Caco-2 (cell line): ENCODE measurements at regions of chr1 and their contacts with region 1.

Region 1: DNA sequence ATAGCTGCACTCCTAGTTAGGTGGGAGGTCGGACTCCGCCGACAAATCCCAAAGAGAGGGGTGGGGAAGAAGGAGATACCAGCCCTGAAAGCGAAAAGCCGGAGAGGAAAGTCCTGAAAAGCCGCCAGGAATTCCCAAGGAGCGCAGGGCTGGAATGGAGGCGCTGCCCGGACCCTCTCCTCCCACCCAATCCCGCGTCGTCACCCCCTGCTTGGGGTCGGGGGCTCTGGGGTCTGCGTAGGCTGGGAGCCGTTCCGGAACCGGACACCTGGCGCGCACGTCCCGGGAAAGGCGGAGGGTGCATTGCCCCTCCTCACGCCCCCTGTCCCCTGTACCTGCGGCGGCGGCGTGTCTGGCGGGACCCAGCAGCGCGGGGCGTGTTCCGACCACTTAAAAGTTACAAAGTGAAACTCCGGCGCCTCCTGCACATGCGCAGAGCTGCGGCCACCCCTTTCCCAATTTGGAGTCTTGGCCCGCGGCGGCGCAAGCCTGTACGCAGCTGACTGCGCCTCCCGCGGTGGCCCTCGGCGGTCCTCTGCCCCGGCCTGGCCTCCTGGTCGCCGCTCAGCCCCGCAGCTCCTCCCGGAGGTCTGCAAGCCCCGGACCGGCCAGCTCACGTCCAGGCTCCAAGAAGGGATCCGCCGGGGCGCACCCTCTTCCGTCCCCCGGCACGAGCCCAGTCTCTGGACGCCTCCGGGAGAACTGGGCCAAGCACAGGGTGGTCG is at the start of gene TMEM63A:
- DNase-seq: peak; percentile 92 to 95
- H3K4me3 ChIP-seq: peak within 1 kb of the TSS; percentile 91
- H3K4me3 Mint-ChIP-seq: peak within 1 kb of the TSS; percentile 95
- H3K27ac Mint-ChIP-seq: peak within 1 kb of the TSS; percentile 91
- H3K4me1 ChIP-seq: peaks cover 29% of the 10 kb centered on the region
- H3K4me1 Mint-ChIP-seq: peaks cover 24% of the 10 kb centered on the region
- H3K27me3 ChIP-seq: no peaks in the 10 kb centered on the region
- H3K27me3 Mint-ChIP-seq: no peaks in the 10 kb centered on the region
- CTCF ChIP-seq: peak in 1 of 2 experiments; percentile 30
- total RNA-seq, gene TMEM63A: 93.9 and 116 TPM in 2 replicates

Region 2: DNA sequence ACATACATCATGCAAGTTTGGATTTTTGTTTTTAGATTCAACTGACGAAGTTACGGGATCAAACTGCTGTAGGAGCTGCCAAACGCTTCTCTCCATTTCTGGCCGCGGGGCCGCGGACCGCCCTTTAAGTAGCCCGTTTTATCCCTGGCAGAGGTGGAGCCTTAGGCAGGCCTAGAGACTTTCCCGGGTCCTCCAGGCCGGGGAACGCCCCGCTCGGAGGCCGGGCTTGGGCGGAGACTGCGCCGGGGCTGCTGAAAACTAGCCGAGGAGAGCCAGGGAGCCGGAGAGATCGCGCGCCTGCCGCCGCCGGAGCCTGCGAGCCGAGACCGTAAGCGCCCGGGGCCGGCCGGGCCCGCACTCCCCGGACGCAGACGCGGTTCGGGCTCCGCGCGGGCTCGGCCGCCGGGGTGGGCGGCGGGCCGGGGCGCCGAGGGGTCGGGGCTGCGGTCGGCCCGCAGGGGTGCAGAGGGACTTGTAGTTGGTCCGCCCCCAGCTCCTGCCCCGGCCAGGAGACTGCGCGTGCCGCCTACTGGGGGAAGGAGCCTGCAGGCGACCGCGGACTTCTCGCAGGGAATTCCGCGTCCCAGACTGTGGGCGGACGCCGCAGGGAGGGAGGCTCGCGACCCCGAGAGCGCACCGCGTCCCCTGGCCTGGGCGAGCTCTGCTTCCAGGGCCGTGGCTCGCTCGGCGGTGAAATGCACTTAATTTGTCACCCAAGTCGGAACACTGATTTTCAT is 72.1 kb before region 1 on chr1 and contains the start of gene EPHX1:
- CTCF ChIA-PET with region 1: interaction called, 9 read pairs
- POLR2A ChIA-PET with region 1: interaction called, 7 read pairs
- intact Hi-C with region 1: loop called (anchors 1 kb)
- DNase-seq: peak; percentile 89 to 93
- H3K4me3 ChIP-seq: peak within 1 kb of the TSS; percentile 89
- H3K4me3 Mint-ChIP-seq: peak within 1 kb of the TSS; percentile 80
- H3K27ac Mint-ChIP-seq: peak within 1 kb of the TSS; percentile 43
- H3K4me1 ChIP-seq: peaks cover 33% of the 10 kb centered on the region
- H3K4me1 Mint-ChIP-seq: peaks cover 27% of the 10 kb centered on the region
- H3K27me3 ChIP-seq: no peaks in the 10 kb centered on the region
- H3K27me3 Mint-ChIP-seq: no peaks in the 10 kb centered on the region
- CTCF ChIP-seq: peak; percentile 16 to 53
- total RNA-seq, gene EPHX1: 73.7 and 88.5 TPM in 2 replicates

Region 3: DNA sequence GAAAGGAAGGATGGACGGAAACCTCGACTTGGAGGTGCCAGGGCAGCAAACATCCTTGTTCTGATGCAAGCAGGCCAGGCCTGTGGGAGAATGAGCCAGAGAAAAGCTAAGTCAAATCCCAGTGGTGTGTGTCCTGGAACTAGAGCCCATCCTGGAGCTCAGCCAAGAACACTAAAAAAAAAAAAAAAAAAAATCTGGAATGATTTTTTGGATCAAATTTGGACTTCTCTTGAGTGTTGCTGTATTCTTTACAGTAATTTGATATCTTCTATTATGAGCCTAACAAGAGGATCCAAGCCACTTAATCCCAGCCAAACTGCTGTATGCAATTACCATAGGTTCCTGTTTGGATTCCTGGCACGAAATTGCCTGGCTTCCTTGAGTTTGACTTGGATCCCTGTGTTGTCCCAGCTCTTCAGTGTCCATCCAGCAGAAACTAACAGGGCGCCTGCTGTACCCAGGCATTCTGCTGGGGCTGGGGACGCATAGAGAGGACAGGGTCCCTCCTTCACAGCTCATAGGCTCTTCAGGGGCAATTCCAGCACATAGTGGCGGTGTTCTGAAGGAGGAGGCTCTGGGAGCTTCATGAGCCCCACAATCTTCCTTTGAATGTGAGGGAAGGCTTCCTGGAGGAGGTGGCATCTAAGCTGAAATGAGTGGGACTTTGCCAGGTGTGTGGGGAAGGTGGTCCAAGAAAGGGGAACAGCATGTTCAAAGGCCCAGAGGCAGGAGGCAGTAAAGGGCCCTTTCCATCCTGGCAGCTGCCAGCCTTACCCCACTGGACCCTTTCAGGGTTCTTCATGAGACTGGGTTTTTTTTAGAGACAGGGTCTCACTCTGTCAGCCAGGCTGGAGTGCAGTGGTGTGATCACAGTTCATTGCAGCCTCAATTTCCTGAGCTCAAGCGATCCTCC is 47.5 kb before region 1 on chr1:
- CTCF ChIA-PET with region 1: no interaction called
- POLR2A ChIA-PET with region 1: no interaction called
- intact Hi-C with region 1: no loop called
- DNase-seq: no peak
- H3K4me3 ChIP-seq: no peak overlapping the region
- H3K4me3 Mint-ChIP-seq: no peak overlapping the region
- H3K27ac Mint-ChIP-seq: no peak overlapping the region
- H3K4me1 ChIP-seq: no peaks in the 10 kb centered on the region
- H3K4me1 Mint-ChIP-seq: no peaks in the 10 kb centered on the region
- H3K27me3 ChIP-seq: no peaks in the 10 kb centered on the region
- H3K27me3 Mint-ChIP-seq: no peaks in the 10 kb centered on the region
- CTCF ChIP-seq: no peak

Region 4: GRCh38 chr1:226083302-226084101 is 201.4 kb after region 1 on chr1:
- CTCF ChIA-PET with region 1: no interaction called
- POLR2A ChIA-PET with region 1: no interaction called
- intact Hi-C with region 1: no loop called
- DNase-seq: peak; percentile 88 to 95
- H3K4me3 ChIP-seq: peak overlapping the region; percentile 74
- H3K4me3 Mint-ChIP-seq: peak overlapping the region; percentile 90
- H3K27ac Mint-ChIP-seq: peak overlapping the region; percentile 60
- H3K4me1 ChIP-seq: no peaks in the 10 kb centered on the region
- H3K4me1 Mint-ChIP-seq: no peaks in the 10 kb centered on the region
- H3K27me3 ChIP-seq: no peaks in the 10 kb centered on the region
- H3K27me3 Mint-ChIP-seq: no peaks in the 10 kb centered on the region
- CTCF ChIP-seq: no peak